PC-9 (cell line): ENCODE measurements at regions of chr13 and their contacts with region 1.

Region 1: DNA sequence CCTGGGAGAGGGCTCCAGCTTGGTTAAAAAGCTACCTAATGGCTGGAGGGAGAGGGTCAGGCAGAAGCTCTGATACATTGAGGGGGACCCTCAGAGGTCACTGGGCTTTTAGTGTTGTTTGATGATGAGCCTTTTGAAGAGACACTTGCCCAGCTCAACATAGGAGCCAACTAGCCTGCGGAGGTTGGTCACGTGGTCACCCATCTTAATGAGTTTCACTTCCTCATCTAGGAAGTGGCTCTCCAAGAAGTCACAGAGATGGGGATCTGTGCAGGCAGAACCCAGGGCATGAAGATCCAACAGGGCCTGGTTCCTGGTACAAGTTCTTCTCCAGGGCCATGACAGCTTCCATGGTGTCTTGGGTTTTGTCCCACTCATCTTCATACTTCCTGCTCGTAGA is 33.4 kb downstream of the IPO5 start:
- DNase-seq: no peak
- H3K4me3 ChIP-seq: no peak overlapping the region
- H3K27ac ChIP-seq: no peak overlapping the region
- H3K4me1 ChIP-seq: no peaks in the 10 kb centered on the region
- H3K27me3 ChIP-seq: no peaks in the 10 kb centered on the region
- CTCF ChIP-seq: no peak

Region 2: GRCh38 chr13:97911311-97912128 is 75.3 kb before region 1 on chr13:
- CTCF ChIA-PET with region 1: no interaction called
- POLR2A ChIA-PET with region 1: no interaction called
- intact Hi-C with region 1: loop called (anchors 2 kb)
- DNase-seq: peak; percentile 5 to 41
- H3K4me3 ChIP-seq: no peak overlapping the region
- H3K27ac ChIP-seq: no peak overlapping the region
- H3K4me1 ChIP-seq: no peaks in the 10 kb centered on the region
- H3K27me3 ChIP-seq: no peaks in the 10 kb centered on the region
- CTCF ChIP-seq: peak; percentile 67

Region 3: DNA sequence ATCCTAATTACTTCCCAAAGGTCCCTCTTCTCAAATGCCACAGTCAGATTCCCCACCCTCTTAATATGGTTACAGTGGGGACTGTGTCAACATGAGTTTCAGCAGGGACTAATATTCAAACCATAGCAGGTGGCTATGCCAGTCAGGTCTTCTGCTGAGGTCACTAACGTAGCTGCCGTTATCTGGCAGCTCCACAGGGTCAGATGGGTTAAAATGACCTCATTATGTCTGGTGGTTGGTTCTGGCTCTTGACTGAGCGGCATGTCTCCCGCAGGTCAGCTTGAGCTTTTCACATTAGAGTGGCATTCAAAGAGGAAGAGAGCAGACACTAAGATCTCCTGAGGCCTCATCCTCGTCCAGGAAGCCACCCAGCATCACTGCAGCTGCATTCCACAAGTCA is 54.8 kb before region 1 on chr13:
- CTCF ChIA-PET with region 1: no interaction called
- POLR2A ChIA-PET with region 1: interaction called, 10 read pairs
- intact Hi-C with region 1: no loop called
- DNase-seq: no peak
- H3K4me3 ChIP-seq: no peak overlapping the region
- H3K27ac ChIP-seq: no peak overlapping the region
- H3K4me1 ChIP-seq: no peaks in the 10 kb centered on the region
- H3K27me3 ChIP-seq: no peaks in the 10 kb centered on the region
- CTCF ChIP-seq: no peak

Region 4: DNA sequence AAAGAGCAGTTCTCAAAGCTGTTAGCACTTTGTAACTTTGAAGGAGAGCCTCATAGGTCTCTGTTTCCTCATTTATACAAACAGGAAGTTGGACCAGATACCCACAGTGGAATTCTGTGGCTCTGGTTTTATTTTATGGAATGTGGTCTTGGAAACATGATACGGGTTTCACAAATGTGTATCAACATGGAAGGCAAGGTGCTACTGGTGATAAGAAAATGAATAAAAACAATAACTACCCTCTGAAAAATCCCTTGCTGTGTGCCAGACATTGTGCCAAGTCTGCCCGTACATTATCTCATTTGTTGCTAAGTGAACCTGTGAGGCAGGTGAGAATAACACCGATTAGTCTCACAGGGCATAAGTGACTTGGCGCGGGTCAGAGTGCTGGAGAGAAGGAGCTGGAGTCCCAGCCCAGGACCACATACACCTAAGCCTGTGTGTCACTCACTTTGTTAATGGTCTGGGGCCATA is 235.3 kb after region 1 on chr13:
- CTCF ChIA-PET with region 1: no interaction called
- POLR2A ChIA-PET with region 1: no interaction called
- intact Hi-C with region 1: no loop called
- DNase-seq: peak in 1 of 2 experiments; percentile 51
- H3K4me3 ChIP-seq: no peak overlapping the region
- H3K27ac ChIP-seq: peak overlapping the region; percentile 23; the same call in 1 of the 2 replicates
- H3K4me1 ChIP-seq: peaks cover 8% of the 10 kb centered on the region; the same call in 1 of the 2 replicates
- H3K27me3 ChIP-seq: no peaks in the 10 kb centered on the region
- CTCF ChIP-seq: no peak

Region 5: DNA sequence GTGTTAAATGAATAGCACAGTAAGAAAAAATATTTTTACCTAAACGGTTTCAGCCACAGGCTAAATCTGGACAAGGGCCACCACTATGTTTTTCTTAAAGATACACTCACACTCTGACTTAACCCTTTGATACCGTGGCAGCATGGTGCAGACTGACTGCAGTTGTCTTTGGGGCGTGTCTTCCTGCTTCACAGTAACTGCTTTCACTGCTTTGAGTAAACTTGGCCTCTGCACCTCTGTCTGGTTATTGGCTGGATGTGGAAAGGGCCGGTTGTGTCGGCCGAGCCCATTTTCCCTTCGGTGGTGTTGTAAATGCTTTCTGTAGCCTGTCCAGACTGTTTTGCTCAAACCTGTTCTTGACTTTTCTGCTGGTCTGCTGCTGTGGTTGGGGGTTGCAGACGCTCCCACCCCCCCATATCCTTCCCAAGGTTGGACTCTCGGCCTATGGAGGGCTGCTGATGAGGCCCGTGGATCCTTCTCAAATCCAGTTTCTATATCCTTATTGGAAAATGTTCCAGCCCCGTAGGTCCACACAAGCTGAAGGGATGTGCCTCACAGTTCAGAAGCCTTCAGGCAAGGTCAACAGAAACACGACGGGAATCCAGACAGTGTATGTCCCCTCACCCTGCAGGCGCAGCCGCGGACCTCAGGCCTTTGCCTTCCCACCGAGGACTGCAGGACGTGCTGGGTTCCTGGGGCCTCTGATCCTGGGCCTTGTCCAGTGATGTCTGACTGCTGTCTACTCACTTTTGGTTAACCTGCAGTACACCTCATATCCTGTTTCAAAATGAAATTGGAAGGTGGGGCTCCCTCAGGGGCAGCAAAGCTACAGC is 280.5 kb after region 1 on chr13:
- CTCF ChIA-PET with region 1: no interaction called
- POLR2A ChIA-PET with region 1: no interaction called
- intact Hi-C with region 1: no loop called
- DNase-seq: no peak
- H3K4me3 ChIP-seq: no peak overlapping the region
- H3K27ac ChIP-seq: no peak overlapping the region
- H3K4me1 ChIP-seq: no peaks in the 10 kb centered on the region
- H3K27me3 ChIP-seq: no peaks in the 10 kb centered on the region
- CTCF ChIP-seq: no peak